ENCODE measurements at regions of chr16 and their contacts with region 1.

Region 1: GRCh38 chr16:66521951-66522771 is 27.8 kb downstream of the TK2 start:
- DNase-seq: peak; percentile 98
- H3K4me3 Mint-ChIP-seq: peak overlapping the region; percentile 50
- H3K27ac Mint-ChIP-seq: peak overlapping the region; percentile 89
- H3K4me1 Mint-ChIP-seq: peaks cover 72% of the 10 kb centered on the region
- H3K27me3 Mint-ChIP-seq: no peaks in the 10 kb centered on the region

Region 2: GRCh38 chr16:66474750-66475199 is 47.4 kb before region 1 on chr16:
- CTCF ChIA-PET with region 1: interaction called, 17 read pairs
- intact Hi-C with region 1: no loop called
- DNase-seq: peak; percentile 73
- H3K4me3 Mint-ChIP-seq: no peak overlapping the region
- H3K27ac Mint-ChIP-seq: peak overlapping the region; percentile 1
- H3K4me1 Mint-ChIP-seq: peaks cover 24% of the 10 kb centered on the region
- H3K27me3 Mint-ChIP-seq: no peaks in the 10 kb centered on the region